ENCODE measurements at regions of chr14 and their contacts with region 1.

Region 1: DNA sequence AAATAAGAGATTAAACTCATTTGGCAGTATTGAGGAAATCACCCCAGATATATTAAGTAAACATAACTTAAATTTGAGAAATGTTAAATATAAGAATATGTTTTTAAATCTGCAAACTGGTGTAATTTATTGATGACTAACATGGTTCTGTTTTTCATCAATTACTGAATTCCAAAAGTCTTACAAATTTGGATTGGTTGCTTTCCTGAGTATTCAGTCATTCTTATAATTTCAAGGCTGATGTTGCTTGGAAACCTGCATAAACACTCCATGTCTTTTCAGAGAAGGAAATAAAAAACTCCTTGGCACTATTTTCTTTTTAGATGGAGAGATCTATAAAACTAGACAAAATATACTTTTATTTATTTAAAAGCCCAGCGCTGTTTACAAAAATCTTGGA is 71.7 kb downstream of the NOVA1 start:
- DNase-seq: no peak
- H3K4me3 Mint-ChIP-seq: no peak overlapping the region
- H3K27ac Mint-ChIP-seq: no peak overlapping the region
- H3K4me1 Mint-ChIP-seq: no peaks in the 10 kb centered on the region
- H3K27me3 Mint-ChIP-seq: no peaks in the 10 kb centered on the region
- CTCF ChIP-seq: no peak

Region 2: GRCh38 chr14:26344596-26344995 is 181.5 kb before region 1 on chr14:
- CTCF ChIA-PET with region 1: interaction called, 10 read pairs
- intact Hi-C with region 1: no loop called
- DNase-seq: no peak
- H3K4me3 Mint-ChIP-seq: no peak overlapping the region
- H3K27ac Mint-ChIP-seq: no peak overlapping the region
- H3K4me1 Mint-ChIP-seq: no peaks in the 10 kb centered on the region
- H3K27me3 Mint-ChIP-seq: no peaks in the 10 kb centered on the region
- CTCF ChIP-seq: no peak

Region 3: GRCh38 chr14:26636561-26636960 is 110.4 kb after region 1 on chr14:
- CTCF ChIA-PET with region 1: no interaction called
- intact Hi-C with region 1: no loop called
- DNase-seq: no peak
- H3K4me3 Mint-ChIP-seq: no peak overlapping the region
- H3K27ac Mint-ChIP-seq: no peak overlapping the region
- H3K4me1 Mint-ChIP-seq: no peaks in the 10 kb centered on the region
- H3K27me3 Mint-ChIP-seq: no peaks in the 10 kb centered on the region
- CTCF ChIP-seq: no peak